AG04449 (cell line): ENCODE measurements at regions of chr12 and their contacts with region 1.

Region 1: DNA sequence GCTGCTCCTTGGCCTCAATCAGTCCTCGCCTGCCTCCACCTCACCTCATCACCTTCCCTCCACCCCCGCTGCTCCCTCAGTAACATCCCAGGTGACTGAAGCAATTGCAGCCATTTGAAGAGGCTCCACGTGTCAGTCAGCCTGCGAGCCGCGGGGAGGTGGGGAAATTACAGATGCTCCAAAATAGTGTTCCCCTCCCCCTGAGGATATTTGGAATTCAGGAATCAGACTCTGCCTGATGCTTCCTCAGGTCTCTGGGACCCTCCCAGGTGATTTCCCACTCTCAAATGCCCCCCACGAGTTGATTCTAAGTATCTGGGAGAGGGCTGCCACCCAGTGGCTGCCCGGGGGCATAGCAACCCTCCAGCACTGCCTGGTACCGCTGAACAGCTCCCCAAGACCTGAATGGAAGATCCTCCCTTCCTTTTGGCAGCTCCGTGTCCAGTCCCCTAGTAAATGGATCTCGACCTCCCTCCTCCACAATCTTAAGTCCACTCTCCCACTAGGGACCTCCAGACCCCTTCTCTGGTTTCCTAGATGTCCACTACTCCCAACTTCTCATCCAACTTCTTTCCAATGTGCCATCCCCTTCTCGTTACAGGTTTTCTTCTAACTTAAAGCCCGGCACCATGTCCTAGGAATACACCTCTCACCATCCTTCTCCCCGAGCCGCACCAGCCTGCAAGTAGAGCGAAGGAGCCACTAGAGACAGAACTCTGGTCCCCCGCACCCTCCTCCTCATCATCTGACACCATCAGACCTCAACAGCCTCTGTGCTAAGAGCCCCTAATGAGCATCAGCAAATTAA is 1.4 kb upstream of the ASIC1 start:
- DNase-seq: no peak
- H3K4me3 ChIP-seq: peak overlapping the region; percentile 29
- CTCF ChIP-seq: peak; percentile 88

Region 2: DNA sequence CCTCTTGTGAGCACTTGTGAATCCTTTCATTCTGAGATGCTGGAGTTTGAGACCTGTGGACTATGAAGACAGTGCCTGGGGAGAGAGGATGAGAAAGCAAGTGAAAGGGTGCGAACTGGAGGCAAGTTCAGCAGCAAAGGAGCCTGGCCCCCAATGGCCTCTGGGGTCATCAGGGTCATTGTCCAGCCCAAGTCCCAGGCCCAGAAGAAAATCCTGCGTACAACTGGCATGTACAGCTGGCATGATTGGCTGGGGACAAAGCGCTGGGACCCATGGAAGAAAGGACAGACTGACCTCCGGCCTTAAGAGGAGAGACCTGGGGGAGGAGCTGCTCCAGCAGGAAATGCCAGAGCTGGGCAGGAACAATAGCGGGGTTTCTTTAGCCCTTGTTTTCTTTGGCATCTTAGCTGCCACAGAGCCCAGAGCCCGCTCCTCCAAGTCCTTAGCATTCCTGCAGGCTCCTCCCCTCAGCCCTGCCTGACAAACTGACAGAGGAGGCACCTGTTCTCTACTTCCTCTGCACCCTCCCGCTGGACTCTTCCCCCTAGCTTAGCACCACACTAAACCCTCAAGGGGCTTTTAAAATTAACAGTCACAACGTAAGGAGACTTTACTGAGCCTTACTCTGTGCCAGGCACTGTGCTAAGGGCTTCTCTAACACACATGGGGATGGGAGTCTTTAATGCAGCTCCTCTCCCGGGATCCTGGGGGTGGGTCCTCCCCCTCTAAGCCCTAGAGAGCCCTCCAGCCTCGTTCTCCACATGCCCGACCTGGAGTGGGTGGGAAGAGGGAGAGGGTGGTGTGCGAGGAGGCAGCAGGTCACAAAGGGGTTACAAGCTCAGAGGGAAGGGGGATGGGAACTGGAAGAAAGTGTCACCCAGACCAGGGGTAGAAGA is 96.2 kb before region 1 on chr12:
- CTCF ChIA-PET with region 1: interaction called, 1,042 read pairs
- POLR2A ChIA-PET with region 1: no interaction called
- DNase-seq: no peak
- H3K4me3 ChIP-seq: no peak overlapping the region
- CTCF ChIP-seq: no peak

Region 3: GRCh38 chr12:50006789-50007436 is 49.1 kb before region 1 on chr12:
- CTCF ChIA-PET with region 1: interaction called, 15 read pairs
- POLR2A ChIA-PET with region 1: no interaction called
- DNase-seq: no peak
- H3K4me3 ChIP-seq: no peak overlapping the region
- CTCF ChIP-seq: no peak

Region 4: GRCh38 chr12:50043854-50044253 is 12.2 kb before region 1 on chr12:
- CTCF ChIA-PET with region 1: interaction called, 254 read pairs
- POLR2A ChIA-PET with region 1: no interaction called
- DNase-seq: no peak
- H3K4me3 ChIP-seq: no peak overlapping the region
- CTCF ChIP-seq: no peak